Dorsolateral prefrontal cortex (tissue), 120 donors: ENCODE measurements at regions of chr2 and their contacts with region 1.

Region 1: DNA sequence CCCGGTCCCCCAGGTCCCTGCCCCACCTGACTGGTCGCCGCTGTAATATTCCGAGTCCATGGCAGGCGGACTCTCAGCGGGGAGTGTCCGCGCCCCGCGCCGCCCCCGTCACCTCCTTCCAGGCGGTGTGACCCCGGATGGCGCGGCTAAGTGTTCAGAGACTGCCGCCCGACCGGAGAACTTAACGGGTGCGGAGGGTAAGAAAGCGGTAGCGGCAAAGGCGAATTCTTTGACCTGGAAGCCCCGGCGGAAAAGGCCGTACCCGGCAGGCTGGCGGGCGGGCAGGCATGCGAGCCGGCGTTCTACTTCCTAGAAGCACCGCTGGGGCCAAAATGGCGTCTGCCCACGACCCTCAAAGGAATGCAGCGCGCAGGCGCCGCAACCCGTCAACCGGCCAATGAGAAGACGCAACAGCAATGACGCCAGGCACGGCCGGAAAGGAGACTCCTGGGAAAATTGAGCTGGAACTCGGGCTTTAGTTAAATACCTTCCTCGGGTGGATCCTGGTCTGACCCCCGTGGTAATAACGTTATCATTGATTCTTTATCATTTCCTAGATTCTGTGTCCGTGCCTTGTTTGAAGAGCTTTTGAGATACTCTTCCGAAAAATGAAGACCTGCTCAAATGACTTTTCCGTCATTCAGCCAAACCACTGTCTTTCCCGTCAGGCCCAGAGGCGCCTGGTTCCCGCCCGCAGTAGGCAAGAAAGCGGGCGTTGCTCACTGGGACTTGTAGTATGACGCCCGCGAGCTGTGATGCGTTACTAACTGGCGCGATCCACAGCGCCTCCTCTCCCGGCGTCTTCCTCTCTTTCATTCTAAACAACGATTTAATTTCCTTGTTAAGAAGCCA is at the start of gene IWS1:
- DNase-seq: peak; percentile 90 to 97 (median 95)
- H3K4me3 ChIP-seq: peak within 1 kb of the TSS; percentile 68 to 100 (median 97)
- H3K27ac ChIP-seq: peak within 1 kb of the TSS; percentile 80 to 99 (median 94)
- H3K27me3 ChIP-seq: no peaks in the 10 kb centered on the region
- CTCF ChIP-seq: peak in 51 of 56 donors; percentile 1 to 72 (median 48)
- total RNA-seq, gene IWS1: 25.8 to 64.1 (median 37.6) TPM

Region 2: DNA sequence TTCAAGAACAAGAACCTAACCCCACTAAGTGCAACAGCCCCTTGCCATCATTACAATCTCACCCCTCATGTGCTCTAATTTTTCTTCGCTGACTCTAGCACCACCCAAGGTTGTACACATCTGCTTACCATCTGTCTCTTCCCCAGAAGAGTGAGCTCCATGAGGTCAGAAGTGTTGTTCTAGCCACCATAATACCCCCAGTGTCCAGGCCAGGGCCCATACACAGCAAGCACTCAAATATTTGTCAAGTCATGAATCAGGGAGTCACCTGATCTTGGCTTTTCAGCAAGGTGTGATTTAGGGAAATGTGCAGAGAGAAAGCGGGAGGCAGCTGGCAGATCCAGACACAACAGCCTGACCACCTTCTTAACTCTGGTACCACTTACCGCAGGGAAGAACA is 238.1 kb before region 1 on chr2:
- intact Hi-C with region 1: no loop called
- DNase-seq: no peak
- H3K4me3 ChIP-seq: no peak overlapping the region
- H3K27ac ChIP-seq: no peak overlapping the region
- H3K27me3 ChIP-seq: no peaks in the 10 kb centered on the region
- CTCF ChIP-seq: no peak

Region 3: DNA sequence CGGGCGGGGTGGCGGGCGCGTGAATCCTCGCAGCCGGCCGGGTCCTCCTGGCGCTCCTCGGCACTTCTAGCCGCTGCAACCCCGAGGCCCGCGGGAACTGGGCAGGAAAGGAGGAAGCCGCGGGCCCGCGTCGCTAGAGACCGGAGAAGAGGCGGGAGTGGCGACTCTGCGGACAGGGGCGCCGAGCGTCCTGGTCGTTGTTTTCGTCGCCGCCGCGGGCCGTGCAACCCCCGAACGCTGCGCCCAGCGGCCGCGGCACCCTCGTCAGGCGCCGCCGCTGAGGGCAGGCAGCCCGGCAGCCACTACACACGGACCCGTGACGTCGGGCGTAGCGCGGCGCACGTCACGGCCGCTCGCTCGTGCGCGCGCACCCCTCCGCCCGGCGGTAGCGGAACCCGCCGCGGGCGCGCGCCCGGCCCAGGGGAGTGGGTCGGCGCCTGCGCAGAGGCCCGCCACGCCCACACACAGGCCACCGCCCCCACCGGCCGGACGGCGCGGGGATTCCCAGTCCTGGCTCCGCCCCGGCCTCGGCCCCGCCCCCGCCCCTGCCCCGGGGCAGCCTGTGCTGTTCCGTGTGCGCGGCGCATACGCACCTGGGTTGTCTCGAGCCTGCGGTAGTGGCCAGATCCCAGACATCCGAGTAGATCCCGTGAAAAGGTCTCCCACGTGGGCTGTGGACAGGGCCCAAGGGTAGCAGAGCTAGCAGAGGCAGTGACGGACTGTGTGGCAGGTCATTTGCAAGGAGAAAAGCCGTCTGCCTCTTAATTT is 138.5 kb before region 1 on chr2 and contains the start of gene MAP3K2:
- intact Hi-C with region 1: loop called in 1 of 2 experiments (anchors 10 kb)
- DNase-seq: peak; percentile 72 to 91 (median 84)
- H3K4me3 ChIP-seq: peak within 1 kb of the TSS; percentile 69 to 100 (median 93)
- H3K27ac ChIP-seq: peak within 1 kb of the TSS; percentile 81 to 100 (median 100)
- H3K27me3 ChIP-seq: no peaks in the 10 kb centered on the region
- CTCF ChIP-seq: peak in 7 of 56 donors; percentile 4 to 18 (median 13)
- total RNA-seq, gene MAP3K2: 36.0 to 66.7 (median 51.9) TPM

Region 4: DNA sequence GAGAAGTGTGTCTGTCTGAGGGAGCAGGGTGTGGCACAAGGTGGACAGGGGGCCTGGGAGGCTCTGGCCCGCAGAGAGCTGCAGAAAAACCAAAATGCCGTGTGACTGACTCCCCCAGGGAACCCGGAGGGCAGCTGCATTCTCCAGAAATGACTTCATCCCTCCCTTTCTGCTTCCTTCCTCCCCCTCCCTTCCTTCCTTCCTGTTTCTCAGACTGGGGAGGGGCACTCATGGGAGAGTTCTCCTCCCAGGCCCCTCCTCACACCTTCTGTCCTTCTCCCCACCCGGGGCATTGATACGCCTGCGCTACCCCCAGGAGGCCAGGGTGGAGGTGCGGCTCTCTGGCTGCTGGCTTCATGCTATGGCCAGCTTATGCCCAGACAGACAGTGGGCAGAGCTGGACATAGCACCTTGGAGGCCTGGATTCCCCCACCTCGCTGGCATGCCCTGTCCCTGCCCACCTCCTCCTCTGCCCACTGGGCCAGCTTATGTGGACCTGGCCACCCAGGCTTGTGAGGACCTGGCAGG is 111.4 kb after region 1 on chr2:
- intact Hi-C with region 1: loop called in 1 of 2 experiments (anchors 5 kb)
- DNase-seq: no peak
- H3K4me3 ChIP-seq: no peak overlapping the region
- H3K27ac ChIP-seq: peak overlapping the region in 35 of 59 donors; percentile 1 to 77 (median 51)
- H3K27me3 ChIP-seq: no peaks in the 10 kb centered on the region
- CTCF ChIP-seq: no peak

Region 5: DNA sequence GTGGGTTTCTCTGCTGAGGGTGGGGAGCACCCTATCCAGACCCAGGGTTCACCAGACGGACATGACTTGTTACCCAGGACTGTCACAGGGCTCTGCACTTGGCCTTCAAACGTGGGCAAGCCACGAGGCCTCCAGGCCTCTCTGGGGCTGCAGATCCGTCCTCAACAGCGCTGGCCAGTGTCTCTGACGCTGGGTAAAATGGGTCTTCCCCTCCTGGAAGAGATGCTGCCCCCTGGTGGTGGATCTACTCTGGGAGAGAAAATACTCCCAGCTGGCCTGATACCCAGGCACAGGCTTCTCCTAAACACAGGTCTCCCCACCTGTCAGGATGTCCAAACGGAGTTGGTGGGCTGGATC is 123.3 kb after region 1 on chr2:
- intact Hi-C with region 1: loop called (anchors 5 kb)
- DNase-seq: peak in 9 of 10 donors; percentile 33 to 84 (median 78)
- H3K4me3 ChIP-seq: peak overlapping the region in 9 of 59 donors; percentile 9 to 37 (median 21)
- H3K27ac ChIP-seq: peak overlapping the region in 56 of 59 donors; percentile 7 to 98 (median 92)
- H3K27me3 ChIP-seq: no peaks in the 10 kb centered on the region
- CTCF ChIP-seq: peak; percentile 73 to 99 (median 86)

Region 6: DNA sequence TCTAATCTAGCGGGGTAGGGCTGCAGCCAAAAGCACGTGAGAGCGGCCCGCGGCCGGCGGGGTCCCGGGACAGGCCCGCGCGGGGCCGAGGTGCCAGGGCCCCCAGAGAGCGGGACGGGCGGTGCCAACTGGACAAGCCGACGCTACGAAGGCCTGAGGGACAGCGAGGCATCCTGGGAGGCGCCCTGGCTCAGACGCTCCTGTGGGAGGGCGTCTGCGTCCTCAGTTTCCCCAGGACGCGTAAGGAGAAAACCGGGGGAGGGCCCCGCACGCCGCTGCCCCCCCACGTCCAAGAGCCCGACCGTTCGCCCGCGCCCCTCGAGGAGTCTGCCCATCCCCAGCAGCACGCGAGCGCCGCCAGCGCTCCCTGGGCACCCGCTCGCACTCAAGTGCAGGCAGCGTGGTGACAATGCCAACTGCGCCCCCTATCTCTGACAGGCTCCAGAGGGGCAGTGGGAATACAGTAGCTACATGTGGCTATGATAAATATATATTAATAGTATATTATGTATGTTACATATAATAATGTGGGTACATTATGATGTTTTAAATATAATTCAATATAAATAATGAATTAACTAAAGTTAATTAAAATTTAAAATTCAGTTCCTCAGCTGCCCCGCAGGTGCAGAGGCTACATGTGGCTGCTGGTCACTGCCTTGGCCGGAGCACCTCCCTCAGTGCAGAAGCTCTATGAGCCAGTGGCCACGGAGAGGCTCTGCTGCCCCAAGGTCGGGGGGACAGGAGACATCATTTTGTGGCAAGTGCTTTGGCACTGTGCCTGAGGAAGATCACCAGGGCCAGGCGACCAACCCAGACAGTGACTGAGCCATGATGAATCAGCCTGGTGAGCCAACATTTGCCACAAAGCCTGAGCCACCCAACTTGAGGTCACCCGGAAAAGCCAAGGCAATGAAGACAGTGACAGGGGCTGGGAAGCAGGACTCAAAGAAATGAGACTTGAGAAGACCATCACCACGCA is 169.4 kb after region 1 on chr2:
- intact Hi-C with region 1: loop called (anchors 5 kb)
- DNase-seq: peak in 8 of 10 donors; percentile 43 to 73 (median 62)
- H3K4me3 ChIP-seq: peak overlapping the region in 54 of 59 donors; percentile 14 to 62 (median 45)
- H3K27ac ChIP-seq: no peak overlapping the region
- H3K27me3 ChIP-seq: no peaks in the 10 kb centered on the region
- CTCF ChIP-seq: peak in 55 of 56 donors; percentile 28 to 88 (median 62)

Region 7: DNA sequence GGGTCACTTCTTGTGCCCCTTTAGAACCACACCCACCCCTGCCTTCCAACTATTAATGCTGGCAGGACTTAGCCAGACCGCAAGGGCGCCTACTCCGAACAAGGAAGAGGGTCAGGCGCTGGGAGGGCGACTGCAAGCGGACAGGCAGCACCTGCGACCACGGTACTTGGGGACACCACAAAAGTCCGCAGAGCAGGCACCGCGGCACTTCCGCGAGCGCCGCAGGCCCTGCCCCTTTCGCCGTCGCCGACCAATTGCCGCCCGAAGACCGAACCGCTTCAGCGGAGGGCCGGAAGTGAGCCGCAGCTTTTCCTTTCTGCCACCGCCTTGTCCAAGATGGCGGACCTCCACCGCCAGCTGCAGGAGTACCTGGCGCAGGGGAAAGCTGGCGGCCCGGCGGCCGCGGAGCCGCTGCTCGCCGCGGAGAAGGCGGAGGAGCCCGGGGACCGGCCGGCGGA is 174.8 kb after region 1 on chr2 and contains the start of gene SFT2D3:
- intact Hi-C with region 1: loop called (anchors 5 kb)
- DNase-seq: peak; percentile 81 to 95 (median 91)
- H3K4me3 ChIP-seq: peak within 1 kb of the TSS; percentile 55 to 96 (median 74)
- H3K27ac ChIP-seq: peak within 1 kb of the TSS; percentile 78 to 99 (median 94)
- H3K27me3 ChIP-seq: no peaks in the 10 kb centered on the region
- CTCF ChIP-seq: peak in 19 of 56 donors; percentile 11 to 49 (median 24)
- total RNA-seq, gene SFT2D3: 1.3 to 5.3 (median 3.1) TPM